Ascending aorta (tissue), 2 donors: ENCODE measurements at regions of chr7 and their contacts with region 1.

Region 1: DNA sequence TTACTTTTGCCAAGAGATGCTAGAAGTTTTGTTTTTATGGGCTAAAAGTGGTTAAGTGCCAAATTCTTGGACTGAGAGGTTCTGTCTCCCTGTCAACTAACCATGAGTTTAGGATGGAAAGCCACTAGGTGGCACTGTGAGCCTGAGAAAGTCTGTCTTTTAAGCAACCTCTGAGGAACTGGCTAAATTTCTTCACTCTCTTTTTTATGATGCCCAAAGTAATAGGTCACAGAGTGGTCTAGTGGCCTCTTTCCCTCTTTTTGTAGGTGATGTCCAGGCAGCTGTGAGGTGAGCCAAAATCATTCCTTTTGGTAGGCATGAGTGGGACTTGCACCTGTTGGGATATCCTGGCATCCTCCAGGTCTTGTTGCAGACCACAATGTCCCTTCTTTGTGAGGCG is 56.8 kb downstream of the SND1 start:
- DNase-seq: peak in 1 of 2 donors; percentile 84
- H3K4me3 ChIP-seq: no peak overlapping the region
- H3K27ac ChIP-seq: no peak overlapping the region
- H3K4me1 ChIP-seq: peaks cover 0 to 2% of the 10 kb centered on the region in 2 donors
- H3K27me3 ChIP-seq: no peaks in the 10 kb centered on the region
- CTCF ChIP-seq: peak; percentile 55 to 76 (median 68)

Region 2: GRCh38 chr7:127651556-127652332 is 57.0 kb before region 1 on chr7 and contains the start of gene SND1:
- intact Hi-C with region 1: loop called (anchors 5 kb)
- DNase-seq: peak; percentile 99 to 100
- H3K4me3 ChIP-seq: peak within 1 kb of the TSS; percentile 73 to 89
- H3K27ac ChIP-seq: peak within 1 kb of the TSS; percentile 93 to 96
- H3K4me1 ChIP-seq: peaks cover 0 to 24% of the 10 kb centered on the region in 2 donors
- H3K27me3 ChIP-seq: no peaks in the 10 kb centered on the region
- CTCF ChIP-seq: no peak
- total RNA-seq, gene SND1: 93.8 TPM

Region 3: GRCh38 chr7:128135515-128136214 is 426.9 kb after region 1 on chr7:
- intact Hi-C with region 1: loop called (anchors 10 kb)
- DNase-seq: peak in 1 of 2 donors; percentile 78
- H3K4me3 ChIP-seq: peak overlapping the region; percentile 68 to 72
- H3K27ac ChIP-seq: no peak overlapping the region
- H3K4me1 ChIP-seq: peaks cover 8% of the 10 kb centered on the region in 2 donors
- H3K27me3 ChIP-seq: no peaks in the 10 kb centered on the region
- CTCF ChIP-seq: peak; percentile 45 to 74 (median 49)

Region 4: DNA sequence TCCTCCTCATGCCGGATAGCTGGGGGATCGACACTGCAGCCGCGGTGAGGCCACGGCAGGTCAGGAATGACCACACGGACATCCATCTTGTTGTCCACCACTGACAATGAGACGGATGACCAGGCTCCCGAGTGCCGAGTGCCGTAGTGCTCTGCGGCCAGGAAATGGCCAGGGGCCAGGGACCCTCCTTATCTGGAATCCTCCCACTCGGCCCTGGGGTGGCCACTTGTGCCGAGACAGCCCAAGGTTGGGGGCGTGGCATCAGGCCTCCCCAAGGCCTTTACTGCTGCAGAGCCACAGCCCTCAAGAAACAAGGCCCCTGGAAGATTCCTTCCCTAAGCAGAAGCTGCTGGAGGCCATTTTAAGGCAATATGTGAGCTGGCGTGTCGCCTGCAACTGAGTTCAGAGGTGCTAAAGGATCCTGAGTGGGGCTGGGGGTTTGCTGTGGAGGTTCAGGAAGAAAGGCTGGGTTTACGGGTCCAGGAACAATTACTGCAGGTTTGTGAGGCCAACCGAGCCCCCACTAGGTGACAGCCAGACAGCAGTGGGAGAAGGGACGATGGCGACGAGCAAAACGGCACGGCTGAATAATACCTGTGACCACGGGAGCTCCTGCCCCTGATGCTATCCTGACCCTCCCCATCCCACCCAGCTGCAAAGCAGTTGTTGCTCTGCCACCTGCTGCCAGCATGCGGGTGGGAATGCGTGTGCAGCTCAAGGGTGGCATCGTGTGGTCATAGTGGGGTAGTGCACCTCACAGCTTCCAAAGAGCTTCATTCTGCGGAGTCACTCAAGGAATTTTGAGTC is 500.6 kb after region 1 on chr7:
- intact Hi-C with region 1: loop called (anchors 1 kb)
- DNase-seq: peak in 1 of 2 donors; percentile 74
- H3K4me3 ChIP-seq: no peak overlapping the region
- H3K27ac ChIP-seq: no peak overlapping the region
- H3K4me1 ChIP-seq: no peaks in the 10 kb centered on the region
- H3K27me3 ChIP-seq: no peaks in the 10 kb centered on the region
- CTCF ChIP-seq: peak; percentile 93 to 98 (median 97)